ENCODE measurements at regions of chr10 and their contacts with region 1.

Region 1: DNA sequence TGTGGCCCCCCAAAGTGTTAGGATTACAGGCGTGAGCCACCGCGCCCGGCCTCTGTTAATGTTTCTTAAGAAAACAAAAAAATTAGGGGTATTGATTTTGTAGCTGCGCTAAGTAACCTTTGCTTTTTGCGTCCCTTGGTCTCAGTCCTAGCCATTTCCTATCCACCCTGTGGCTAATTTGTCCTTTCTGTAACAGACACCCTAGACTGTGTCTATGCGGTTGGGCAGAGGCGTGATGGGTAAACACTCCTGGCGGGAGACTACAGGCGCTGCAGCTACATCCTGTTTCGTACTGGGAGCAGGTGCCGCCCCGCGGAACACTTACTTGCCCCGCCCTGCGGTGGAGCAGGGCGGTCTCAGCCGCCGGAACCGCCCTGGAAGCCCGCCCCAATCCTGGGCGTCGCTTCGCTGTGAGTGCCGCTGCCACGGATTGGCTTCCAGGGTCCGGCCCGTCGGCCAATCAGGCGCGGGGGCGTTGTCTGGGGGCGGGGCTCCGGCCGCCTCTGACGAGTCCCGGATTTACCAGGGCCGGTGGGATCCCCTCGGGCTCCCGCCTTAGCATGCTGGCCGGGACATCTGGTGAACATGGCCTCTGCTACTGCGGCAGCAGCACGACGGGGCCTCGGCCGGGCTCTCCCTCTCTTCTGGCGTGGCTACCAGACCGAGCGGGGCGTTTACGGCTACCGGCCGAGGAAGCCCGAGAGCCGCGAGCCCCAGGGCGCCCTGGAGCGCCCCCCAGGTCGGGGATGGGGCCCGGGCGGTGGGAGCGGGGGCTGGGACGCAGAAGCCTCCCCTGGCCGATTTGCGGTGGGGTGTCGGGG is at the start of gene DHTKD1:
- DNase-seq: peak; percentile 99
- ATAC-seq: peak; percentile 99
- H3K4me3 ChIP-seq: peak within 1 kb of the TSS; percentile 99
- H3K27ac ChIP-seq: peak within 1 kb of the TSS; percentile 73
- H3K4me1 ChIP-seq: peaks cover 13 to 27% of the 10 kb centered on the region in 2 experiments; a peak in 4 of 5 replicates
- H3K27me3 ChIP-seq: no peaks in the 10 kb centered on the region
- CTCF ChIP-seq: peak; percentile 34 to 44 (median 34); a peak in 4 of 6 replicates
- EP300 ChIP-seq: peak; percentile 35; the same call in 1 of the 2 replicates
- POLR2A ChIP-seq: peak; percentile 84
- RAD21 ChIP-seq: peak in 1 of 2 experiments; percentile 16; a peak in 1 of 4 replicates
- polyA plus RNA-seq, gene DHTKD1: 3.1 to 3.3 TPM

Region 2: DNA sequence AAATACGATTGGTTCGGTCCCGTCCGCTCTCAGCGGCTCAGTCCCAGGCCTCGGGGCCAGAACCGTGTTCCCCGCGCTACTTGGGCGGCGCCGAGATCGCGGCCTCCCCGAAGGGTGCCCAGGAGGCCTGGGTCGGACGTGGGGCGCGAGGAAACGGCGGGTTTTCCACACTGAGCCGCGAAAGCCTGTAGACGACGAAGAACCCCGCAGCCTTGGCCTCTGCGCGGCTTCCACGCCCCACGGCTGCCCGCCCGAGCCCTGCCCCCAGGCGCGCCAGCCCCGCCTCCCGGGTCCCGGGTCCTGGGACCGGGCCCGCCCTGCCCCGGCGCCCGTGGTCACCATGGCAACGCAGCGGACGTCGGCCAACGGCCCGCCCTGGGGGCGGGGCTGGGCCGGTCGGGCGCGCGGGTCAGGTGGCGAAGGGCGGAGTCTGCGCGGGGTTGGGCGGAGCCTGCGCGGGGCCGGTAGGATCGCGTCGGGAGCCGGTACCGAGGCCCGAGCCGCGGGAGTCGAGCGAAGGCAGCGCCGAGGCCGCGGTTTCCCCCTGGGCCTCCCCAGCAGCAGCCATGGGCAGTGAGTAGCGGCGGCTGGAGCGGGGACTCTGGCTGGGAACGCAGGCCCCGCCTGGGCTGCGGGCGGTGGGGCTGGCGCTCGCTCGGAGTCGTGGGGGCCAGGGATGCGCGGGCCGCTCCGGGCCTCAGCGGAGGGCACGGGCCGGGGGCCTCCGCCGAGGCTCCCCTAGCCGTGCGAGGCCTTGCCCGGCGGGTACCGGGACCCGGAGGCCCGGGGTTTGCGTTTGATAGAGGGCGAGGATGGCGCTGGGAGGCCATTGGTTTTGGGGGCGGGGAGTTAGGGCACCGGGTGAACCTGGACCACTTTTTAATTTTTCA is 60.8 kb after region 1 on chr10 and contains the start of gene SEC61A2:
- CTCF ChIA-PET with region 1: no interaction called
- POLR2A ChIA-PET with region 1: interaction called, 3 read pairs
- in situ Hi-C with region 1: no loop called
- intact Hi-C with region 1: loop called (anchors 5 kb)
- DNase-seq: peak; percentile 95 to 100 (median 100)
- ATAC-seq: peak; percentile 96
- H3K4me3 ChIP-seq: peak within 1 kb of the TSS; percentile 98
- H3K27ac ChIP-seq: peak within 1 kb of the TSS; percentile 94
- H3K4me1 ChIP-seq: peaks cover 7 to 24% of the 10 kb centered on the region in 2 experiments; a peak in 4 of 5 replicates
- H3K27me3 ChIP-seq: no peaks in the 10 kb centered on the region
- CTCF ChIP-seq: no peak
- EP300 ChIP-seq: no peak
- POLR2A ChIP-seq: peak; percentile 84
- RAD21 ChIP-seq: no peak
- polyA plus RNA-seq, gene SEC61A2: 1.2 to 1.4 TPM